H1 (cell line): ENCODE measurements at regions of chr9 and their contacts with region 1.

Region 1: DNA sequence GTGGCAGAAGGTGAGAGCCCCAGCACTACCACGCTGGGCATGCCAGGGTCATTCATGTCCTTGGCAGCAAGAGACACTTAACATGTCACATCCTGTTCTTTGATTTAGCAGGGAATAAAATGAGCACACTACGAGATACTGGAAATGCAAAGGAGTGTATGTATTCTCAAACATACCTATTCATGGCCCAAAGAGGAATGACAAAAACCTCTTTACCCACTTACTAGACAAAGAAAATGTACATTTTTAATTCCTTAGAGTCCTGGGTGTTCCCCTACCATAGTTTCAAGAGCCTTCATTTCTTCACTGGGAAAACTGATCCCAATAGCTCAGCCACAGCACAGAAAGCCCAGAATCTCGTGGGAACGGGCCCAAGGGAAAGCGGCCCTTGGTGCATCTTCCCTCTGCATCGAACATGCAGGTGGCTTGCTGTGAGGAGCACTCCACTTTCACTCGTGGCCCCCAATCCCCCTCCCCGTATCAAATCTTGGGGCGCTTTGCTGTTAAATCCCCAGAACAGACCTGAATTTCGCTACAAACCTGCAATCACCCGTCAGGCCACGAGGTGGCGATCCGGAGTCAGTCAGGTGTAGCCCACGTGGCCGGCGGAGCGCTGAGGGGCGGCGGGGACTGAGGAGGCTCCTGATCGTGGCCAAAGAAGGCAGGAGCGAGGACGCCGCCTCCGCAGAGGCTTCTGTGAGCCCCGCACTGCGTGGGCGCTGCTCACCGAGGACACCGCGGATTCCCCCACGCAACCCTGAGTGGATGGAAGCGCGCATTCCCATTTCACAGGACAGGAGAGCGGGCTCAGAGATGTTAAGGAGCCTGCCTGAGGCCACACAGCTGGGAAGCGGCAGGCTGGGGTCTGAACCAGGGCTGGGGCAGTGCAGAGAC is 91.4 kb downstream of the LMX1B start:
- DNase-seq: peak; percentile 47 to 98
- H3K4me3 ChIP-seq: peak overlapping the region in 3 of 4 experiments; percentile 5 to 31 (median 19); a peak in 2 of 8 replicates
- H3K27ac ChIP-seq: no peak overlapping the region
- H3K4me1 ChIP-seq: peaks cover 0 to 11% (median 8%) of the 10 kb centered on the region in 4 experiments; a peak in 5 of 7 replicates
- H3K27me3 ChIP-seq: peaks cover 4 to 36% (median 30%) of the 10 kb centered on the region in 4 experiments
- CTCF ChIP-seq: peak in 2 of 3 experiments; percentile 93 to 94; a peak in 3 of 4 replicates
- EP300 ChIP-seq: no peak
- POLR2A ChIP-seq: no peak
- RAD21 ChIP-seq: peak; percentile 68 to 77

Region 2: GRCh38 chr9:126093771-126094170 is 611.3 kb before region 1 on chr9:
- CTCF ChIA-PET with region 1: no interaction called
- POLR2A ChIA-PET with region 1: no interaction called
- DNase-seq: no peak
- H3K4me3 ChIP-seq: no peak overlapping the region
- H3K27ac ChIP-seq: no peak overlapping the region
- H3K4me1 ChIP-seq: no peaks in the 10 kb centered on the region
- H3K27me3 ChIP-seq: no peaks in the 10 kb centered on the region; a peak in 1 of 7 replicates
- CTCF ChIP-seq: no peak
- EP300 ChIP-seq: no peak
- POLR2A ChIP-seq: no peak
- RAD21 ChIP-seq: no peak

Region 3: GRCh38 chr9:126604059-126605055 is 100.8 kb before region 1 on chr9:
- CTCF ChIA-PET with region 1: interaction called, 54 read pairs
- POLR2A ChIA-PET with region 1: no interaction called
- DNase-seq: no peak
- H3K4me3 ChIP-seq: no peak overlapping the region
- H3K27ac ChIP-seq: no peak overlapping the region
- H3K4me1 ChIP-seq: peaks cover 0 to under 1% (median 0%) of the 10 kb centered on the region in 4 experiments; a peak in 1 of 7 replicates
- H3K27me3 ChIP-seq: peaks cover 9 to 29% (median 21%) of the 10 kb centered on the region in 4 experiments
- CTCF ChIP-seq: no peak
- EP300 ChIP-seq: no peak
- POLR2A ChIP-seq: no peak
- RAD21 ChIP-seq: no peak

Region 4: GRCh38 chr9:126661521-126662220 is 43.4 kb before region 1 on chr9:
- CTCF ChIA-PET with region 1: interaction called, 49 read pairs
- POLR2A ChIA-PET with region 1: interaction called, 3 read pairs
- DNase-seq: peak; percentile 84 to 90
- H3K4me3 ChIP-seq: no peak overlapping the region; a peak in 1 of 8 replicates
- H3K27ac ChIP-seq: no peak overlapping the region
- H3K4me1 ChIP-seq: peaks cover 11 to 41% (median 30%) of the 10 kb centered on the region in 4 experiments
- H3K27me3 ChIP-seq: peaks cover 0 to 6% (median 2%) of the 10 kb centered on the region in 4 experiments; a peak in 3 of 7 replicates
- CTCF ChIP-seq: peak in 2 of 3 experiments; percentile 62 to 81; a peak in 3 of 4 replicates
- EP300 ChIP-seq: no peak
- POLR2A ChIP-seq: no peak
- RAD21 ChIP-seq: peak; percentile 62 to 75

Region 5: DNA sequence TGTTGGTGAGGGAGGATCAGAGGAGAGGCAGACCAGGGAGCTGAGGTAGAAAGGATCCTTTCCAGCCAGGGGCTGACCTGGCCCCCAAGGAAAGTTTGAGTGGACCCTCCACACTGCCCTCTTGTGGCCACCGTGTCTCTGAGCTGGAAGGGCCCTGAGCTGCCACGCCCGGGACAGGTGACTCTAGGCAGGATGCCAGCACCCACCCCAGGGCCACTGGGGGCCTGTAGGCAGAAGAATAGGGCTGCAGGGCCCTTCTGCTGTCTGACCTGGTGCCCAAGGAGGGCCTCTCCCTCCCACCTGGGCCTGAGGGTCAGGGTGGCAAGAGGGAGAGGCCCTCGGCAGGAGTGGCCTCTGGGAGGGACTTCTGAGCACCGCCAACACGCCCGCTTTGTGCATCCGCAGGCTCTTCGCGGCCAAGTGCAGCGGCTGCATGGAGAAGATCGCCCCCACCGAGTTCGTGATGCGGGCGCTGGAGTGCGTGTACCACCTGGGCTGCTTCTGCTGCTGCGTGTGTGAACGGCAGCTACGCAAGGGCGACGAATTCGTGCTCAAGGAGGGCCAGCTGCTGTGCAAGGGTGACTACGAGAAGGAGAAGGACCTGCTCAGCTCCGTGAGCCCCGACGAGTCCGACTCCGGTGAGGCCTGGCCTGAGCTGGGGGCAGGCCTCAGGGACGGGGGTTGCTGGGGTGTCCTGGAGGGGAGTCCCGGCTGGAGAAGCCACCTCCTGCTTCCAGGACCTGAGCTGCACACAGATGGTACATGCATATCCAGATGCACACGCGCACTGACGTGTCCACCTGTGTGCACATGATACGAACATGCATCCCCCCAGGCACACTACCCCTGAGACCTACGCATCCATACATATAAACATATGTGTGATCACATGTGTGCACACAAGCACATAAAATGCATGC is 14.4 kb before region 1 on chr9:
- CTCF ChIA-PET with region 1: interaction called, 104 read pairs
- POLR2A ChIA-PET with region 1: interaction called, 6 read pairs
- DNase-seq: peak in 1 of 2 experiments; percentile 95
- H3K4me3 ChIP-seq: no peak overlapping the region
- H3K27ac ChIP-seq: no peak overlapping the region
- H3K4me1 ChIP-seq: peaks cover 0 to 13% (median 3%) of the 10 kb centered on the region in 4 experiments; a peak in 5 of 7 replicates
- H3K27me3 ChIP-seq: peaks cover 0 to 7% (median 2%) of the 10 kb centered on the region in 4 experiments; a peak in 2 of 7 replicates
- CTCF ChIP-seq: peak in 2 of 3 experiments; percentile 88 to 91; a peak in 3 of 4 replicates
- EP300 ChIP-seq: no peak
- POLR2A ChIP-seq: no peak
- RAD21 ChIP-seq: peak; percentile 71 to 83

Region 6: GRCh38 chr9:126733005-126733404 is 27.9 kb after region 1 on chr9:
- CTCF ChIA-PET with region 1: interaction called, 48 read pairs
- POLR2A ChIA-PET with region 1: no interaction called
- DNase-seq: peak in 1 of 2 experiments; percentile 3
- H3K4me3 ChIP-seq: no peak overlapping the region
- H3K27ac ChIP-seq: no peak overlapping the region
- H3K4me1 ChIP-seq: no peaks in the 10 kb centered on the region
- H3K27me3 ChIP-seq: no peaks in the 10 kb centered on the region
- CTCF ChIP-seq: no peak
- EP300 ChIP-seq: no peak
- POLR2A ChIP-seq: no peak
- RAD21 ChIP-seq: no peak

Region 7: DNA sequence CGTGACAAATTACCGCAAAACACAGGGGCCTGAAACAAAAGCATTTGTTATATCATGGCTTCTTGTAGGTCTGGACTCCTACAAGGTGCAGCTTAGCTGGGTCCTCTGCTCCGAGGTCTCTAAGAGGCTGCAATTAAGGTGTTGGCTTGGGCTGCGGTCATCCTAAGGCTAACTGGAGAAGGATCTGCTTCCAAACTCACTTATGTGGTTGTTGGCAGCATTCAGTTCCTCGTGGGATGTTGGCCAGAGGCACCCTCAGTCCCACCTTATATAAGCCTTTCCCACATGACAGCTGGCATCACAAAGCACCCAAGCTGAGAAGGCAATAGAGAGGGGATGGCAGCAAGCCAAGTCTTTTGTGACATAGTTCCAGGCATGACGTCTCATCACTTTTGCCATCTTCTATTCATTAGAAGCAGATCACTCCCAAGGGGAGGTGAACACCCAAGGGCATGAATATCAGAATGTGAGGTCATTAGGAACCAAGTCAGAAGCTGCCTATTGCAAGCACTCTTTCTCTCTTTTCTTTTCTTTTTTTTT is 51.8 kb after region 1 on chr9:
- CTCF ChIA-PET with region 1: interaction called, 12 read pairs
- POLR2A ChIA-PET with region 1: no interaction called
- DNase-seq: no peak
- H3K4me3 ChIP-seq: no peak overlapping the region
- H3K27ac ChIP-seq: no peak overlapping the region
- H3K4me1 ChIP-seq: no peaks in the 10 kb centered on the region
- H3K27me3 ChIP-seq: no peaks in the 10 kb centered on the region
- CTCF ChIP-seq: no peak
- EP300 ChIP-seq: no peak
- POLR2A ChIP-seq: no peak
- RAD21 ChIP-seq: no peak

Region 8: GRCh38 chr9:126791406-126792151 is 86.5 kb after region 1 on chr9:
- CTCF ChIA-PET with region 1: interaction called, 415 read pairs
- POLR2A ChIA-PET with region 1: no interaction called
- DNase-seq: no peak
- H3K4me3 ChIP-seq: no peak overlapping the region
- H3K27ac ChIP-seq: no peak overlapping the region
- H3K4me1 ChIP-seq: peaks cover 0 to 2% (median 0%) of the 10 kb centered on the region in 4 experiments; a peak in 3 of 7 replicates
- H3K27me3 ChIP-seq: 0 out of 7 replicates have a peak, but pooled peaks cover 0 to 3% (median 0%) of the 10 kb centered on the region in 4 experiments
- CTCF ChIP-seq: no peak
- EP300 ChIP-seq: no peak
- POLR2A ChIP-seq: no peak
- RAD21 ChIP-seq: no peak

Region 9: DNA sequence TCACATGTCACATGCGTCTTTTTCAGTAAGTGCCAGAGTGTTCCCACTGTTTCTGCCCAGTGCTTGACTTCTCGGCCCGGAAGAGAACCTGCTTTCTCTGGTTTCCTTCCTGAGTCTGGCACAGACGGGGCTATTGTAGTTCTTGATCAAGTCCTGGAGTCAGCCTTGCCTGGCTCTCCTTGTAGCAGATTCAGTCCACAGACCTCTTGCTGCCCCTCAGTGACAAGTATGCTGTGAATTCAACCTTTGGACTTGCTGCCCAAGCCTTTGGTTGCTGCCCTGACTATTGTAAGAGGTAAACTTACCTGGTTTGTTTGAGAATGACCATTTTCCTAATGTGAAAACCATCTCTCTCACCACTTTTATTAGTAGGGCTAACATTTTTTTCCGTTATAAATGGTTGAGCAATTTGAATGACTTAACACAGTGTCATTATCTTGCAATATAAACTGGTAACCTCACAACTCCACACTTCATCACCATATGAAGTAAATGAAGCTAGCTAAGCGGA is 180.1 kb after region 1 on chr9:
- CTCF ChIA-PET with region 1: no interaction called
- POLR2A ChIA-PET with region 1: no interaction called
- DNase-seq: no peak
- H3K4me3 ChIP-seq: no peak overlapping the region
- H3K27ac ChIP-seq: no peak overlapping the region
- H3K4me1 ChIP-seq: peaks cover 6 to 13% (median 10%) of the 10 kb centered on the region in 4 experiments
- H3K27me3 ChIP-seq: no peaks in the 10 kb centered on the region
- CTCF ChIP-seq: no peak
- EP300 ChIP-seq: no peak
- POLR2A ChIP-seq: no peak
- RAD21 ChIP-seq: no peak

Region 10: GRCh38 chr9:127104465-127105311 is 399.6 kb after region 1 on chr9:
- CTCF ChIA-PET with region 1: no interaction called
- POLR2A ChIA-PET with region 1: no interaction called
- DNase-seq: no peak
- H3K4me3 ChIP-seq: no peak overlapping the region
- H3K27ac ChIP-seq: no peak overlapping the region
- H3K4me1 ChIP-seq: no peaks in the 10 kb centered on the region; a peak in 1 of 7 replicates
- H3K27me3 ChIP-seq: no peaks in the 10 kb centered on the region
- CTCF ChIP-seq: no peak
- EP300 ChIP-seq: no peak
- POLR2A ChIP-seq: no peak
- RAD21 ChIP-seq: no peak